Dorsolateral prefrontal cortex (tissue), 120 donors: ENCODE measurements at regions of chr10 and their contacts with region 1.

Region 1: GRCh38 chr10:79929409-79929904 is 19.4 kb downstream of the SFTPD start:
- DNase-seq: peak; percentile 68 to 83 (median 72)
- H3K4me3 ChIP-seq: peak overlapping the region in 1 of 59 donors; percentile 11
- H3K27ac ChIP-seq: no peak overlapping the region
- H3K27me3 ChIP-seq: peaks cover 0 to 13% (median 0%) of the 10 kb centered on the region in 45 donors
- CTCF ChIP-seq: peak; percentile 62 to 98 (median 93)

Region 2: DNA sequence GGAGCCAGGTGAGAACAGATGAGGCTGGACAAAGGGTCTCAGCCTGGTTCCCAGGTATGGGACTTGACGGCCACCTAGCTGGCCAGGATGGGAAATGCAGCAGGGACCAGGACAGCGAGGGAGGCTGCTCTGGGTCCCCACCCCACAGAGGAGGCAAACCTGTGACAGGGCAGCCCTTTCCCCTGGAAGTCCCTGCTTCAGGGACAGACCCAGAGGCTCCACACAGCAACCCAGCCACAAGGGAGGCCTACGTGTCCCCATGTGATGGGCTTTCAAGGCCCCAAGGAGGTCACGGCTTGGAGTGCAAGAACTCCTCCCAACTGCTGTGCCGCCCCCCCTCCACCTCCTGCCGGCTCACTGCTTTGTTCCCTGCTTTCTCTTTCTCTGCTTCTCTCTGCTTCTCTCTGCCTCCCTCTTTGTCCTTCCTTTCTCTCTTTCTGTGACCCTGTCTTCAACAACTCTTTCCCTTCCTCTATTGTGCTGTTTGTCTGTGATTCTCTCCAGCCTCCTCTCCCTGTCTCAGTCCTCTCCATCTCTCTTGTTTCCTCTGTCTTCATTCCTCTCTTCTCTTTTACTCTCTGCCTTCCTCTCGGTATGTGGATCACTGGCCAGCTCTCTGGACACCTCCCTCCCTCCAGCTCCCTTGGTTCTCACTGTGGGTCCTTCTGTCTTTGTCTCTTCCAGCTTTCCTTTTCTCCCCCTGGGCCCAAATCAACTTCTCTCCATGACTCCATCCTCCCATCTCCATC is 426.7 kb before region 1 on chr10:
- intact Hi-C with region 1: no loop called
- DNase-seq: no peak
- H3K4me3 ChIP-seq: no peak overlapping the region
- H3K27ac ChIP-seq: no peak overlapping the region
- H3K27me3 ChIP-seq: peaks cover 0 to 10% (median 0%) of the 10 kb centered on the region in 45 donors
- CTCF ChIP-seq: peak in 16 of 56 donors; percentile 6 to 38 (median 17)

Region 3: GRCh38 chr10:79562135-79562756 is 367.2 kb before region 1 on chr10:
- intact Hi-C with region 1: loop called (anchors 5 to 10 kb)
- DNase-seq: peak; percentile 54 to 81 (median 74)
- H3K4me3 ChIP-seq: peak overlapping the region in 39 of 59 donors; percentile 1 to 52 (median 36)
- H3K27ac ChIP-seq: no peak overlapping the region
- H3K27me3 ChIP-seq: peaks cover 0 to 5% (median 0%) of the 10 kb centered on the region in 45 donors
- CTCF ChIP-seq: peak; percentile 44 to 83 (median 74)